Sciatic nerve (tissue), 2 donors: ENCODE measurements at regions of chr9 and their contacts with region 1.

Region 1: DNA sequence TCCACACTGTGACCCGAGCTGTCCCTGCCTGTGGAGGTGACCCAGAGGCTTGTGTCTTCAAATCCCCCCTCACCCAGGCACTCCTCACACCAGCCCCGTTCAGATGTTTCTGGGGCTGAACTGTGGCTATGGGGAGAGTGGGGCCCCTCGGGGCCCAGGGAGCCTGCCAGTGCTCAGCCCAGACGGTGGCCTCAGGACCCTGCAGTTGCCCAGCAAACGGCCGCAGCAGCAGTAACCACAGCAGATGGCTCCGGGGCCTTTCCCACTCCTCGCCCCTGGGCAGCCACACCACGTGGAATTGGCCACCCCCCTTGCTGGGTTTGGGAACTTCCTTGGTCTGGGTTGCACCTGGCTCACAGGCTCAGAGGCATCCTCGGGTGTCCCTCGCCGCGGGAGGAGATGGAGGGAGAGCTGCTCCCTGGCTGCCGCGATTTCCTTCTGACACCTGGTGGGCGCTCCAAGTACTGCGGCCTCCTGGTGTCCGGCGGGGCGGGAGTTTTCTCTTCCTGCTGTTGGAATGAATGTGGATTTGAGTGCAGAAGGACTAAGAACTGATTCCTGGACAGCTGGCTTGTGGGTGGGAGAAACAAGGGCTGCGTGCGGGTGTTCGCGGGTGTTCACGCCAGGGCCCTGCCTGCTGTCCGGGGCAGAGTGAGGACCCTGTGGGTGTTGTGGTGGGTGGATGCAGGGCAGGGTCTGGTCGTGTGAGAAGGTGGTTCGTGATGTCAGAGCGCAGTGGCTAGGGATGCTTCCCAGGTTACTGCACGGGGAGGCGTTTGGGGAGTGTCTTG is 97.5 kb downstream of the COL5A1 start:
- DNase-seq: peak; percentile 90
- ATAC-seq: peak; percentile 67

Region 2: GRCh38 chr9:134088063-134088725 is 650.9 kb before region 1 on chr9:
- intact Hi-C with region 1: no loop called
- DNase-seq: peak; percentile 37
- ATAC-seq: peak; percentile 22

Region 3: DNA sequence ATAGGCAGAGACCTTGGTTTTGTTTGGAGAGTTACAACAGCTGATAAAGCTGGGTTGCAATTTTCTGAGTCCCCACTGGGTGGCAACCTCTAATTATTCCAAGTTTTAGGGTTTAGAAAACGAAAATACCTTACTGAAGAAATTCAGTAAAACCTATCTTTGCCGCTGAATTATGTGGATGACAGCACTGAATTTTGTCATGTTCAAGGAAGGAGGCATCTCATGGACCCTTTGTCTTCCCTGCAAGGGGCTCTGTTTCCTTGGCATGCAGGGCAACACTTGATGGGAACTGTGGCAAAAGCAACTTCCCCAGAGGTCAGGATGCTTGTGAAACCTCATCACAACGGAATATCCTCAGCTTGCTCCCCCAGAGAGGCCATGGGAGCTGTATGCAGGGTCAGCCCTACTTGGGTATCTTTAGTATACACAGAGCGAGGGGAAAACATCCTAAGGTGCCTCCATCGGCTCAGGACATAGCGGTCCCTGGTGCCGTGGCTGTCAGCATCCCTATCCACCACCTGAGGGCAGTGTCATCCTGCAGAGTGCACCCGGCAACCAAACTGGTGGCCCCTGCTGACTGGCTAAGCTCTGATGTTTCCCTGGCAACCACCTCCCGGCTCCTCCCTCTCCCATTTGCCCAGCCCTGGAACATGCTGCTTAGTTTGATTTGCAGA is 289.7 kb before region 1 on chr9:
- intact Hi-C with region 1: loop called (anchors 1 kb)
- DNase-seq: peak; percentile 94
- ATAC-seq: peak; percentile 95

Region 4: GRCh38 chr9:134551650-134552348 is 187.3 kb before region 1 on chr9:
- intact Hi-C with region 1: no loop called
- DNase-seq: peak; percentile 80
- ATAC-seq: peak; percentile 51

Region 5: DNA sequence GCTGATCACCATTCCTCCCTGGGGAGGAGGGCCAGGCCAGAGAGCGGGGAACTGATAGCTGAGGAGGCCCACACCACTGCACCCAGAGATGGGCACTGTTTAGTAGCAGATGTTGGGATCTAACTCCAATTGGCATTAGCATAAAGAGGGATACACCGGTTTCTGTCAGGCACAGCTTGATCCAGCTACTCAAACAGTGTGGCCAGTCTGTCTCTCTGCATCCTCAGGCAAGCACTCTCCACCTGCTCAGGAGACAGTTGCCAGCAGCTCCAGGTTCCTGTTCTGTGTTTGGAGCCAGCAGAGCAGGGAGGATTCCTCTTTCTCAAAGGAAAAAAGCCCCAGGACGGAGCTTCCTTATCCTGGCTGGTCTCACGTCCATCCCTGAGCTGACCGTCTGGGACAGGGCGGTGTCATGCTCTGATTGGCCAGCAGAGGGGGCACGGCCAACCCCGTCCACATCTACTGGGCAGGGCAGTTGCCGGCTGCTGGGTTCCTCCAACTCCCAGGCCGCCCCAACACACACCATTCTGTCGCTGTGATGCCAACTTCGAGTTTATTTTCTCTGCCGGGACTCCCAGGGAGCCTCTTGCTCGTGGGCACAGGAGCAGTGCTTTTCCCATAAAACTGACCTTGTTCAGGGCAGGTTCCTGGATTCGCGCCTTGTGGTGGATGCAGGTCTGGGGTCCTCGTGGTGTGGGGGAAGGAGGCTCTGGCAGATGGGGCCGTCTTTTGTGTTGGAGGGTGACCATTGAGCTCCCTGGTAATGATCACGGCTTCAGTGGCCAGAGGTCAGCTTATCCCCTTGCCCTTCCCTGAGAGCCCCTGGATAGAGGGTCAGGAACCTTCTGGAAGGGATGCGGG is 49.5 kb before region 1 on chr9:
- intact Hi-C with region 1: no loop called
- DNase-seq: peak; percentile 85
- ATAC-seq: peak; percentile 88

Region 6: DNA sequence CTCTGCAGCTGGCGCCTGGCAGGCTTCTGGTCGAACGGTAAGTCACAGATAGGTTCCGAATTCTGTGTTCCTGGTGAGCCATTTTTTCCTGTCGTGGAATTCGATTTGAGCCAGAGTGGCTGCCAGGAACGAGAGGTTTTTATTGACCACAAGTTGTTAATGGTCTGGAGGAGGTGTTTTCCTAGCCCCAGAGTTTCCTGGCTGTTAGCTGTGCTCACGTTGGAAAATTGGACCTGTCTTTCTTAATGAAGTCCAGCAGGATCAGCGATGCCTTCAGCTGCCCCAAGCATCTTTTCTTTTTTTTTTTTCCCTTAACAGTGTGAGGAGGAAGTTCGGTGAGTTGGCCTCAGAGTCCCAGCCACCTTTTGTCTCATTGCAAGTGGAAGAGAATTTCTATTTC is 34.6 kb before region 1 on chr9:
- intact Hi-C with region 1: loop called (anchors 5 kb)
- DNase-seq: no peak
- ATAC-seq: no peak

Region 7: DNA sequence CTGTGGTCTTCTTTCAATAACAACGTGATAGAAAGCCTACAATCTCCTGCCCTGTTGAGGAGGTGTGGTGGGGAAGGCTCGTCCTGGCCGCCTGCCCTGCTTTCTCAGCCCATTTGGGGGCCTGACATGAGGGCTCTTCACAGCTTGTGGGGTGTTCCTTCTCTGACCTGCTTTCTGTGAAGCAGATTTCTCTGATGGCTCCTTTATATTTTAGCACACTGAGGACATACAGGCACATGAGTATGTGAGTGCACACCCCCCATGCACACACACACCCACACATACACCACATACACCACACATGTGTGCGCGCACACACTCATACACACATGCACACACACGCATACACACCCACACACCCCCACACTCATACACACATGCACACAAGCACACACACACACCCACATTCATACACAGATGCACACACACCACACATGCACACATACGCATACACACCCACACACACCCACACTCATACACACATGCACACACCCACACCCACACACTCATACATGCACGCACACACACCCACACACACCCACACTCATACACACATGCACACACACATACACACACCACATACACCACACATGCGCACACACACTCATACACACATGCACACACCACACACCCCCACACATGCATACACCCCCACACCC is 20.0 kb after region 1 on chr9:
- intact Hi-C with region 1: no loop called
- DNase-seq: no peak
- ATAC-seq: no peak